ENCODE measurements at regions of chr16 and their contacts with region 1.

Region 1: GRCh38 chr16:4500272-4500671 is 24.1 kb downstream of the HMOX2 start:
- DNase-seq: no peak
- ATAC-seq: no peak
- H3K4me3 Mint-ChIP-seq: no peak overlapping the region
- H3K27ac Mint-ChIP-seq: no peak overlapping the region
- H3K4me1 Mint-ChIP-seq: peaks cover 72% of the 10 kb centered on the region
- H3K27me3 Mint-ChIP-seq: no peaks in the 10 kb centered on the region

Region 2: GRCh38 chr16:4365014-4365406 is 135.3 kb before region 1 on chr16:
- CTCF ChIA-PET with region 1: no interaction called
- POLR2A ChIA-PET with region 1: no interaction called
- DNase-seq: no peak
- ATAC-seq: no peak
- H3K4me3 Mint-ChIP-seq: no peak overlapping the region
- H3K27ac Mint-ChIP-seq: no peak overlapping the region
- H3K4me1 Mint-ChIP-seq: no peaks in the 10 kb centered on the region
- H3K27me3 Mint-ChIP-seq: no peaks in the 10 kb centered on the region

Region 3: DNA sequence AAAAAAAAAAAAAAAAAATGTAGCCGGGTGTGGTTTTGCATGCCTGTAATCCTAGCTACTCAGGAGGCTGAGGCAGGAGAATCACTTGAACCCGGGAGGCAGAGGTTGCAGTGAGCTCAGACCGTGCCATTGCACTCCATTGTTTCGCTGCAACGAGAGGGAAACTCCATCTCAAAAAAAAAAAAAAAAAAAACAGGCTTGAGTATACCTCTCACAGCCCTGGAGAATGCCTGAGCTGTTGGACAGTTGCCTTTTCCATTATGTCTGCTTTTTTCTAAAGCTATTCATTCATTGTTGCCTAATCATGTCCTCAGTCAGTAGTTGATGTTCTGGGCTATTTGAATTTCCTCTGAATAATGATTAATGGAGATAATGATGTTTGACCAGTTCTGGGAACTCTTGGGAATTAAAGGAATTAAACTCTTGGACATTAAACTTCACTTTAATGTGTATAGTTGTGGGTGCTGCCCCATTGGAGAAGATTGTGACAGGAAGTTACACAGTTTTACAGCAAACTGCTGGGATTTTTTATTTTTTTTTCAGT is 12.2 kb before region 1 on chr16:
- CTCF ChIA-PET with region 1: interaction called, 173 read pairs
- POLR2A ChIA-PET with region 1: interaction called, 14 read pairs
- DNase-seq: peak; percentile 35
- ATAC-seq: peak; percentile 68
- H3K4me3 Mint-ChIP-seq: peak overlapping the region; percentile 64
- H3K27ac Mint-ChIP-seq: peak overlapping the region; percentile 92
- H3K4me1 Mint-ChIP-seq: peaks cover 62% of the 10 kb centered on the region
- H3K27me3 Mint-ChIP-seq: no peaks in the 10 kb centered on the region

Region 4: GRCh38 chr16:4586291-4586690 is 86.0 kb after region 1 on chr16:
- CTCF ChIA-PET with region 1: interaction called, 40 read pairs
- POLR2A ChIA-PET with region 1: no interaction called
- DNase-seq: no peak
- ATAC-seq: no peak
- H3K4me3 Mint-ChIP-seq: no peak overlapping the region
- H3K27ac Mint-ChIP-seq: no peak overlapping the region
- H3K4me1 Mint-ChIP-seq: peaks cover 4% of the 10 kb centered on the region
- H3K27me3 Mint-ChIP-seq: peaks cover 11% of the 10 kb centered on the region

Region 5: GRCh38 chr16:4601036-4601863 is 101.0 kb after region 1 on chr16:
- CTCF ChIA-PET with region 1: no interaction called
- POLR2A ChIA-PET with region 1: no interaction called
- DNase-seq: no peak
- ATAC-seq: no peak
- H3K4me3 Mint-ChIP-seq: no peak overlapping the region
- H3K27ac Mint-ChIP-seq: no peak overlapping the region
- H3K4me1 Mint-ChIP-seq: no peaks in the 10 kb centered on the region
- H3K27me3 Mint-ChIP-seq: peaks cover 3% of the 10 kb centered on the region

Measured in activated CD8-positive, alpha-beta T cell treated with anti-CD3 and anti-CD28 coated beads, Interleukin-2, amount 10 ng/mL, durations not matched to agents 7 days and 5 days (primary cell).